ENCODE measurements at regions of chr4 and their contacts with region 1.

Region 1: DNA sequence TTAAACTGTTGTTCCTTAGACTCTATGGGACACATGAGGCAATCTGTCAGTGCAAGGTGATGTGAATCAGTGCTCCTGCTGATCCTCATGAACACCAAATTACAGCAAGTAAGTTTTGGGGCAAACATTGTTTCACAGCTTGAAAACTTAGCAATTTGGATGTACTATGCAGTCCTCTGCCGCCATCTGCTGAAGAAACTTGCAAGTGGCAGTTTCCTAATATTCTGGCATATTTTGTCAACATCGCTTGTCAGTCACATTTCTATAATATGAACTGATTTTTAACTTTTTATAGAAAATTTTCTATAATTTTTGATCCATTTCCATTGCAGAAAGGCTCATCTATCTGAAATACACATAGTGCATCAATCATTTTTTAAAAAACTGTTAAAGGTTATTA is 56.3 kb downstream of the ZAR1 start:
- DNase-seq: peak in 4 of 9 experiments; percentile 9 to 31 (median 22)
- ATAC-seq: no peak
- H3K4me3 ChIP-seq: no peak overlapping the region
- H3K4me3 Mint-ChIP-seq: no peak overlapping the region
- H3K27ac ChIP-seq: no peak overlapping the region
- H3K27ac Mint-ChIP-seq: no peak overlapping the region
- H3K4me1 ChIP-seq: no peaks in the 10 kb centered on the region
- H3K4me1 Mint-ChIP-seq: no peaks in the 10 kb centered on the region
- H3K27me3 ChIP-seq: no peaks in the 10 kb centered on the region
- H3K27me3 Mint-ChIP-seq: no peaks in the 10 kb centered on the region
- CTCF ChIP-seq: peak; percentile 31

Region 2: GRCh38 chr4:47972181-47972580 is 574.2 kb before region 1 on chr4:
- CTCF ChIA-PET with region 1: no interaction called
- POLR2A ChIA-PET with region 1: no interaction called
- intact Hi-C with region 1: loop called in 1 of 2 experiments (anchors 5 kb)
- DNase-seq: no peak
- ATAC-seq: no peak
- H3K4me3 ChIP-seq: no peak overlapping the region
- H3K4me3 Mint-ChIP-seq: no peak overlapping the region
- H3K27ac ChIP-seq: no peak overlapping the region
- H3K27ac Mint-ChIP-seq: no peak overlapping the region
- H3K4me1 ChIP-seq: no peaks in the 10 kb centered on the region
- H3K4me1 Mint-ChIP-seq: no peaks in the 10 kb centered on the region
- H3K27me3 ChIP-seq: no peaks in the 10 kb centered on the region
- H3K27me3 Mint-ChIP-seq: peaks cover 3% of the 10 kb centered on the region
- CTCF ChIP-seq: no peak

Region 3: GRCh38 chr4:48079972-48080391 is 466.4 kb before region 1 on chr4:
- CTCF ChIA-PET with region 1: no interaction called
- POLR2A ChIA-PET with region 1: no interaction called
- intact Hi-C with region 1: loop called in 1 of 2 experiments (anchors 10 kb)
- DNase-seq: no peak
- ATAC-seq: no peak
- H3K4me3 ChIP-seq: no peak overlapping the region
- H3K4me3 Mint-ChIP-seq: no peak overlapping the region
- H3K27ac ChIP-seq: no peak overlapping the region
- H3K27ac Mint-ChIP-seq: peak overlapping the region; percentile 73
- H3K4me1 ChIP-seq: no peaks in the 10 kb centered on the region
- H3K4me1 Mint-ChIP-seq: peaks cover 27% of the 10 kb centered on the region
- H3K27me3 ChIP-seq: no peaks in the 10 kb centered on the region
- H3K27me3 Mint-ChIP-seq: no peaks in the 10 kb centered on the region
- CTCF ChIP-seq: no peak

Region 4: GRCh38 chr4:48315728-48316630 is 230.4 kb before region 1 on chr4:
- CTCF ChIA-PET with region 1: interaction called, 3 read pairs
- POLR2A ChIA-PET with region 1: no interaction called
- intact Hi-C with region 1: loop called in 1 of 2 experiments (anchors 2 kb)
- DNase-seq: peak in 4 of 9 experiments; percentile 16 to 67 (median 38)
- ATAC-seq: no peak
- H3K4me3 ChIP-seq: no peak overlapping the region
- H3K4me3 Mint-ChIP-seq: no peak overlapping the region
- H3K27ac ChIP-seq: no peak overlapping the region
- H3K27ac Mint-ChIP-seq: no peak overlapping the region
- H3K4me1 ChIP-seq: no peaks in the 10 kb centered on the region
- H3K4me1 Mint-ChIP-seq: no peaks in the 10 kb centered on the region
- H3K27me3 ChIP-seq: no peaks in the 10 kb centered on the region
- H3K27me3 Mint-ChIP-seq: no peaks in the 10 kb centered on the region
- CTCF ChIP-seq: peak; percentile 63

Region 5: DNA sequence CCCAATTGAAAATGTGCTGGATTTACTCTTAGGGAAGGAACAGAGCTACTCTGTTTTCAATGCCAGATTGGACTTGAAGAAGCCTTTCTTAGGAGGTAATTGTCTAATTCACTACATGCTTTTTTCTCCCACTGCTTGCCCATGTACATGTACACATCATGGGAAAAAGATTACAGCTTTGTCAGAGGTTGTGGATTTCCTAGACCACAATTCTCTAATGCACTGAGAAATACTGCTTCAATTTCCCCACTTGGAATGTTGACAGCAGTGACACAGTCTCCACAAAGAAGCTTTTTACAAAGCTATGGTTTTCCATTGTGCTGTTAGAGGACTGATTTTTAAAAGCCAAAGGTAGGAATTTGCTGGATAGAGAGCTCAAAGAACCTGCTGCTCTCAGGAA is 36.8 kb before region 1 on chr4:
- CTCF ChIA-PET with region 1: no interaction called
- POLR2A ChIA-PET with region 1: no interaction called
- intact Hi-C with region 1: loop called in 1 of 2 experiments (anchors 5 kb)
- DNase-seq: no peak
- ATAC-seq: no peak
- H3K4me3 ChIP-seq: no peak overlapping the region
- H3K4me3 Mint-ChIP-seq: no peak overlapping the region
- H3K27ac ChIP-seq: no peak overlapping the region
- H3K27ac Mint-ChIP-seq: no peak overlapping the region
- H3K4me1 ChIP-seq: no peaks in the 10 kb centered on the region
- H3K4me1 Mint-ChIP-seq: no peaks in the 10 kb centered on the region
- H3K27me3 ChIP-seq: no peaks in the 10 kb centered on the region
- H3K27me3 Mint-ChIP-seq: no peaks in the 10 kb centered on the region
- CTCF ChIP-seq: no peak